ENCODE measurements at regions of chr4 and their contacts with region 1.

Region 1: GRCh38 chr4:24980064-24980690 is 50.6 kb downstream of the LGI2 start:
- DNase-seq: peak in 1 of 2 donors; percentile 59
- ATAC-seq: peak; percentile 81
- H3K4me3 ChIP-seq: no peak overlapping the region
- H3K27ac ChIP-seq: no peak overlapping the region
- H3K4me1 ChIP-seq: no peaks in the 10 kb centered on the region
- H3K27me3 ChIP-seq: no peaks in the 10 kb centered on the region

Region 2: DNA sequence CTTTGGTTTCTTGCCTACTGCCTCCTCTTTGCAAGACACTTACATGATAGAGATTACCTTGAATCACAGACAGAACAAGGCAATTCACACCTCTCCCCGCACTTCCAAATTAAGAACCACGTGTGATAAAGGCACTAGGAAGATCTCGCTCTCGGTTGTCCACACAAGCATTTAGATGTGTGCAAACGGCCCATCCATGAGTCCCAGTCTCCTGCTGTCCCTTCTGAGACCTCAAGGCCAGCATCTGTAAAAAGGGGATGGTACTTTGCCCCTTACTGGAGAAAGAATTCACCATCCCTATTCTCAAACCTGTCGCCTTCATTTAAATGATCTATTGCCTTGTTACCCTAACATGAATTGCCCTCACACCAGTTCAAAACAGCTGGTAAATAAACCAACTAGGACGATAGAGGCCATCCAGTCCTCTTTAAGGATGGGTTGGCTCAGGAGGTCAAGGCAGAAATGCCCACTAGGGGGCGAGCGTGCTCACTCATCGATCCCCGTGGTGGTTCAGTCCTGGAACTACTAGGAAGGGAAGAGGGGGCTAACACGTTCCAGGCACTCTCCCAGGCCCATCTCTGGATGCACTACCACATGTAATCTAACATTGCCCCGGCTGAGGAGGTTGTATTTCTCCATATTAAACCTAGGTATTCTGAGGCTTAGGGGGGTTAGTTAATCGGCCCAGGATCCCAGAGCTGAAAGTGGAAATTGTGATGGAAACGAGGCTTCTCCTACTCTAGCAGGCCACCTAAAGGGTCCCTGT is 491.6 kb before region 1 on chr4:
- intact Hi-C with region 1: loop called (anchors 5 to 10 kb)
- DNase-seq: peak; percentile 78 to 92
- ATAC-seq: peak; percentile 77
- H3K4me3 ChIP-seq: no peak overlapping the region
- H3K27ac ChIP-seq: no peak overlapping the region
- H3K4me1 ChIP-seq: no peaks in the 10 kb centered on the region
- H3K27me3 ChIP-seq: no peaks in the 10 kb centered on the region

Region 3: DNA sequence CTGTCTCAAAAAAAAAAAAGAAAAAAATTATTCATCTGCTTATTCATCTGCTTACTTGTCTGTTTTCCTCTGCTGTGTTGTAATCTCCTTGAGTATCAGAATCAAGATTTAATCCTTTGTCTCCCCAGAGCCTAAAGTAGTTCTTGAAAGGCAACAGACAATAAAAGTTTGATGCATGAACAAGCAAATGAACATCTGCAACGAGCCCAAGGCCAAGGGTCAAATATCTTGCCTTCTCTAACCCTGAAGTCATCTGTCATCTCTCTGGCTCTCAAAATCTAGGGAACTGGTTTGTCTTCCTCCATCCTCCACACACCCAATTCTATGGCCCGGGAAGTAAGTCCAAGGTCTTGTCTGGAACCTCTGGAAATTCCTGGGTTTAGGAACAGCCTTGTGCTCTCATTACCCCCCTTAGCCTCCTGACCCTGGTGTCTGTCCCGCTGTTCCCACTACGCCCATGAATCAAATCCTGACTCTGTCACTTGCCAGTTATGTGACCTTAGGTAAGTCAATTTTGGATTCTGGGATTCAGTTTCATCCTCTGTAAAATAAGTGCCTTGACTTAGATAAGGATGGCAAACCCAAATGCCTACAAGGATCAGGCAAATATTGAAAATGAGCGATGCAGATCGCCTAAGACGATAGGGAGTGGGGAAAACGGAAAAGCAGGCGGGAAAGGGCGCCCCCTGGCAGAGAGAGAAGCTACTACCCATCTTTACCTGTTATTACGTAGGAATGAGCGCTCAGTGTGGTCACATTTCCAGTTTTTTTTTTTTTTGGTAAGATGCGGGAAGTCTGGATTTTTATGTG is 293.1 kb before region 1 on chr4:
- intact Hi-C with region 1: loop called (anchors 5 to 10 kb)
- DNase-seq: no peak
- ATAC-seq: peak; percentile 24
- H3K4me3 ChIP-seq: no peak overlapping the region
- H3K27ac ChIP-seq: no peak overlapping the region
- H3K4me1 ChIP-seq: no peaks in the 10 kb centered on the region
- H3K27me3 ChIP-seq: no peaks in the 10 kb centered on the region

Region 4: DNA sequence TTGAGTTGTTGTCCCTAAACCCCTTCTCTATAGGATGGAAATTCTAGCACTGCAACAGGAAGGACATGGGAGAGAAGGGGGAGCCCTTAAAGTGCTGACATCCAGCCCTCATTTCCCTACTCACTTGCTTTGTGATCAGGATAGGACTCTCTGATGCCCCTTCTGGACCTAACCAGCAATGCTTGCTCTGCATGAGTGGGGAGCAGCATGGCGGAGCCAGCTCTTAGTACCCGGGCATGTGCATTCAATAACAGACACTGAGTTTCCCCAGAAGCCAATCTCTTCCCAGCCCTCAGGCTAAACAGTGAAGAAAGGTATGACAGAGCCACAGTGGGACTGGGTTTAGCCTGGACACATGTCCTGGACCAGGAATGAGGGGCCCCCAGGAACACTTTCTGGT is 170.8 kb before region 1 on chr4:
- intact Hi-C with region 1: loop called in 1 of 2 experiments (anchors 10 kb)
- DNase-seq: no peak
- ATAC-seq: peak; percentile 5
- H3K4me3 ChIP-seq: no peak overlapping the region
- H3K27ac ChIP-seq: peak overlapping the region in 1 of 2 donors; percentile 23
- H3K4me1 ChIP-seq: peaks cover 3 to 5% of the 10 kb centered on the region in 2 donors
- H3K27me3 ChIP-seq: no peaks in the 10 kb centered on the region

Region 5: GRCh38 chr4:25144870-25145481 is 164.8 kb after region 1 on chr4:
- intact Hi-C with region 1: loop called (anchors 5 kb)
- DNase-seq: no peak
- ATAC-seq: no peak
- H3K4me3 ChIP-seq: no peak overlapping the region
- H3K27ac ChIP-seq: no peak overlapping the region
- H3K4me1 ChIP-seq: no peaks in the 10 kb centered on the region
- H3K27me3 ChIP-seq: no peaks in the 10 kb centered on the region

Measured in aorta (tissue), 5 donors.